Endothelial cell of umbilical vein (primary cell): ENCODE measurements at regions of chr17 and their contacts with region 1.

Region 1: DNA sequence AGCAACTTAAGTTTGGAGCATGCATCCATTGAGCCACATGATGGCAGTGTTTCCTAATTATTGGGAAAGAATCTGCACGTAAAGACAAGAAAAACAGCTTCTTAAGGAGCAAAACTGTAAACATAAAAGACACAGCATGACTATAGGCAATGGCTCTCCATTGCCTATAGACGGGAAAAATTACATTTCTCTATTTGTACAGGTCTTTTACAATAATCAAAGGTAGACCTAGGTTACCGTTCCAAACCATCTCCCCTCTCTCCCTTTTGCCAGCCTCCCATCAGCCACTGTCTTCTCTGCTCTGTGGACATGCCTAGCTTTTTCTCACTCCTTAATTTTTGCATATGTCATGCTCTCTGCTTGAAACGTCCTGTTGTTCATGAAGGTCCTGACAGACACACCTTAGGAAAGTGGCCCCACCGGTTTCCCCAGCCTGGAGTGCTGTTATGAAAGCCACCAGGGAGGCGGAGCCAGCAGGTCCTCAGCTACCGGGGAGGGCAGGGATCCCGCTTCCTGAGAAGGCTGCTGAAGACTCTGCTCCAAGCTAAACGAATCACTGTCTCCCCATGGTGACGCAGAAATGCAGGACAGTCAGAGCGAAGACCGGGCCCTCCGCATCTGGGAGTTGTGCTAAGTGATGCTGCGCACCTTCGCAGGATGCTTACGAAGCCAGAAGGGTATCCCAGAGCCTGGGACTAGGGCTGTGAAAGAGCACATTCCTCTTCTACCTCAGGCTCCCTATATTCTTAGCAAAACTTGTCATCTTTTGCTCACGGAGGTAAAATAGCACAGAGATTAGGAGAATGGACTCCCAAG is 2.2 kb upstream of the SLC16A11 start:
- DNase-seq: peak; percentile 89
- H3K4me3 ChIP-seq: no peak overlapping the region
- H3K27ac ChIP-seq: no peak overlapping the region
- H3K4me1 ChIP-seq: peaks cover 27% of the 10 kb centered on the region
- H3K27me3 ChIP-seq: no peaks in the 10 kb centered on the region
- CTCF ChIP-seq: peak; percentile 52 to 58
- POLR2A ChIP-seq: no peak

Region 2: GRCh38 chr17:7060165-7060891 is 14.2 kb after region 1 on chr17:
- CTCF ChIA-PET with region 1: interaction called, 23 read pairs
- POLR2A ChIA-PET with region 1: interaction called, 3 read pairs
- dilution Hi-C with region 1: no loop called
- intact Hi-C with region 1: no loop called
- DNase-seq: peak; percentile 100
- H3K4me3 ChIP-seq: no peak overlapping the region
- H3K27ac ChIP-seq: peak overlapping the region; percentile 86
- H3K4me1 ChIP-seq: peaks cover 35% of the 10 kb centered on the region
- H3K27me3 ChIP-seq: no peaks in the 10 kb centered on the region
- CTCF ChIP-seq: no peak
- POLR2A ChIP-seq: peak; percentile 78

Region 3: GRCh38 chr17:7167832-7168231 is 121.7 kb after region 1 on chr17:
- CTCF ChIA-PET with region 1: interaction called, 69 read pairs
- POLR2A ChIA-PET with region 1: no interaction called
- dilution Hi-C with region 1: no loop called
- intact Hi-C with region 1: no loop called
- DNase-seq: no peak
- H3K4me3 ChIP-seq: no peak overlapping the region
- H3K27ac ChIP-seq: no peak overlapping the region
- H3K4me1 ChIP-seq: no peaks in the 10 kb centered on the region
- H3K27me3 ChIP-seq: no peaks in the 10 kb centered on the region
- CTCF ChIP-seq: no peak
- POLR2A ChIP-seq: no peak

Region 4: DNA sequence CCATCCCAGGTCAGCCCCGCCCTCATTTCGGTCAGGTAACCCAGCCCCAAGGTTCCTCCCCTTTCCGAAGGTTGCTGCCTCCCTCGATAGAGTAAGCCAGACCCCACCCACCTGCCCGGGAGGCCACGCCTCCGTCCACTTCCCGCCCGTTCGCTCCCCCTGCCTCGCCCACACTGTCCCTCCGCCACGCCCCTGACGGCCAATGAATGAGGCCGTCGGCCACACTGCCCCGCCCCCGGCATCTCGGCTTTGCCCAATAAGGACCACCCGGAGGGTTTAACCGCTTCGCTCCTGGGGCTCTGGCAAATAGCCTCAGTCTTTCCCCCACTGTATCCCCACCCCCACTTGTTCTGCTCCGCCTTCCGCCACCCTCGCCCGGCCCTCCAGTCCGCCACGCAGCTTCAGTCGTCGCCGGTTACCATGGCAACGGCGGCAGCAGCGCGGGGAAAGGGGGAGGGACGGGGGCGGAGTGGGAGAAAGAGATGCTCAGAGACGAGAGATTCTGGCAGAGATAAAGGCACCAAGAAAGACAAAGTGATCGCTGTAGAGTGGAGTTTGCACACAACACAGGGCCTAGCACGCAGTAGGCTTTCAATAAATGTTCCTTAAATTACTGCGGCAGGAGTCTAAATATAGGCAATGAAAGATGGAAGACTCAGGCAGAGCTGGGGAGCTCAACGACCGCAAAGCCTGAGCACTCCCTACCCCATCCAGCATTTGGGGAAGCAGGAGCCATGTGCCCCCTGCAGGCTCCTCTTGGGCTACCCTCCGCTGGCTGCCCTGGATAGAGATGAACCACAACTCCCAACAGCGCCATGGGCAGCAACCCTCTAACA is 168.4 kb after region 1 on chr17:
- CTCF ChIA-PET with region 1: interaction called, 28 read pairs
- POLR2A ChIA-PET with region 1: no interaction called
- dilution Hi-C with region 1: no loop called
- intact Hi-C with region 1: no loop called
- DNase-seq: peak; percentile 99
- H3K4me3 ChIP-seq: peak overlapping the region in 2 of 3 experiments; percentile 43 to 44
- H3K27ac ChIP-seq: peak overlapping the region; percentile 63
- H3K4me1 ChIP-seq: peaks cover 33% of the 10 kb centered on the region
- H3K27me3 ChIP-seq: no peaks in the 10 kb centered on the region
- CTCF ChIP-seq: peak; percentile 48 to 74
- POLR2A ChIP-seq: no peak

Region 5: DNA sequence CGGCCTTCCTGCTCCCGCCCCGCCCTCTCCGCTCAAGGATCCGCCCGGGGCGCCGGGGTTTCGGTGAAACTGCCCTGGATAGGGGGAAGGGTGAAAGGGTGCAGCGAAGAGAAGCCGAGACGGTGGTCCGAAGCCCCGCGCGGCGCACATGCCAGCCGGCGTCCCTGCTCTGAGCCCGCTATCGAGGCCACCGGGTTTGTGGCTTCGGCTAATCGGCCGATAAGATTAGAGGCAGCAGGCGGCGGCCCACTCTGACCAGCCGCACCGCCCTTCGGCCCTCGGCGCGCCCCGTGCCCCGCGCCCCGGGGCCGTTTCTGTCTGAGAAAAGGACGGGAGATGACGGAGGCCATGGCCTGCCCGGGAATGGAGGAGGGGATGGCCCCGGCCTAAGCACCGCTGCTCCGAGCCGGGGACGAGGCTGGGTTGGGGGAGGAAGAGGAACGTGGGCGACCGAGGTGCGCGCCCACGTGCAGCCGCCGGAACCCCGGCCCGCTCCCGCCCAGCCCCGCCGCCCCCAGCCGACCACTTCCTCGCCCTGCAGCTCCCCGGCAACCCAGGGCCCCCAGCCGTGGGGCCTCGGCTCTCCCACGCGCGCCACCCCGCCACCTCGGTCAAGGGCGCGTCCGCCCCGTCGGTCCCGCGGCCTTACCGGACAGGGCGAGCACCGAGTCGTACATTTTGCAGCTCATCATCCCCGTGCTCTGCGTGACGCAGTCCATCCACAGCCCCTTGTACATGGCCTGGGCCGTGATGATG is 215.2 kb after region 1 on chr17:
- CTCF ChIA-PET with region 1: no interaction called
- POLR2A ChIA-PET with region 1: no interaction called
- dilution Hi-C with region 1: no loop called
- intact Hi-C with region 1: no loop called
- DNase-seq: no peak
- H3K4me3 ChIP-seq: peak overlapping the region; percentile 8 to 19 (median 13)
- H3K27ac ChIP-seq: no peak overlapping the region
- H3K4me1 ChIP-seq: peaks cover 26% of the 10 kb centered on the region
- H3K27me3 ChIP-seq: no peaks in the 10 kb centered on the region
- CTCF ChIP-seq: no peak
- POLR2A ChIP-seq: no peak

Region 6: GRCh38 chr17:7351665-7352501 is 305.8 kb after region 1 on chr17 and contains the start of gene KCTD11:
- CTCF ChIA-PET with region 1: interaction called, 31 read pairs
- POLR2A ChIA-PET with region 1: no interaction called
- dilution Hi-C with region 1: no loop called
- intact Hi-C with region 1: loop called (anchors 2 kb)
- DNase-seq: peak; percentile 76
- H3K4me3 ChIP-seq: peak within 1 kb of the TSS; percentile 54 to 78 (median 70)
- H3K27ac ChIP-seq: peak within 1 kb of the TSS; percentile 78
- H3K4me1 ChIP-seq: peaks cover 17% of the 10 kb centered on the region
- H3K27me3 ChIP-seq: no peaks in the 10 kb centered on the region
- CTCF ChIP-seq: peak in 1 of 2 donors; percentile 69
- POLR2A ChIP-seq: peak; percentile 57
- total RNA-seq, gene KCTD11: 3.5 and 3.8 TPM in 2 replicates